K562 (cell line): ENCODE measurements at regions of chr7 and their contacts with region 1.

Region 1: DNA sequence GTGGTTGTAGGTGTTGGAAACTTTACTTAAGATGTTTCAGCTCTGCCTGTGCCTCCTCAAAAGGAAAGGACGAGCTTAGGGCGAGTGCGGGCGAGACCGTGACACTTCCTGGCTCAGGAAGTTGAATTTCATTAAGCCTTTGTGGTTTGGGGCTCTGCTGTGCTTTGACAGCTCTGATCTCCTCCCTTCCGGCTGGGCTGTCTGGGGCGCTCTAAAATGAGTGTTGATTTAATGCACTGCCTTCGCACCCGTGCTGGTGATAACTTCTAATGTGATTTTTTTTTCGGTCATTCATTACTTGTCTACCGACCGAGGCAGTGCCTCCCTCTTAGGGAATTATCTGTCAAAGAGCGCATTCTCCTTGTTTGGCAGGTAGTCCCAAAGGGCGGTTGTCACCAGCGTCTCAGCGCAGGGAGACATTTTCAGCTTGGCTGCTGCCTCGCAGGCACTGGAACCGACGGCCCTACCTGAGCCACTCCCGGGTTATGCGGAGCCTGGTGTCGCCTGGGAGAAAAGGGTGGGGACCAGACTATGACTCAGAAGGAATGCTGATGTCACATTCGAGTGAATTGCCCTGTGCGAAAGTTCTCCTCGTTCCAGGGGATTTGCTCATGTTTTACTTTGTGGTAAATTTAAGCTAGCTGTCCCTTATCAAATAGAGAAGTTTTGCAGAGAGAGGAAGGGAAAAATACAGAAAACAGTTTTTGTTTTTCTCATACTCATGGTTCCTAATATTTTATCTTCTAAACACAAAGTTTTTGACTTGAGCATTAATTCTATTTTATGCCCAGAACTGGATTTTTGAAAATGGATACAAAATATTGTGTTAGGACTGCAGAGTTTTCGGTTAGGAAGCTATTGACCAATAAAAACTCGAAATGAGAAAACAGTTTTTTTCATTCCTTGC is 920 bp downstream of the TES start:
- DNase-seq: peak; percentile 82 to 95 (median 88)
- ATAC-seq: peak; percentile 88
- H3K4me3 ChIP-seq: peak overlapping the region; percentile 74
- H3K27ac ChIP-seq: peak overlapping the region; percentile 88
- H3K4me1 ChIP-seq: peaks cover 10 to 28% of the 10 kb centered on the region in 2 experiments
- H3K27me3 ChIP-seq: no peaks in the 10 kb centered on the region
- CTCF ChIP-seq: no peak
- EP300 ChIP-seq: peak; percentile 54; the same call in 1 of the 2 replicates
- POLR2A ChIP-seq: peak; percentile 92
- RAD21 ChIP-seq: peak in 1 of 2 experiments; percentile 7; a peak in 2 of 4 replicates

Region 2: GRCh38 chr7:116200963-116201362 is 10.3 kb before region 1 on chr7:
- CTCF ChIA-PET with region 1: no interaction called
- POLR2A ChIA-PET with region 1: interaction called, 13 read pairs
- in situ Hi-C with region 1: no loop called
- intact Hi-C with region 1: no loop called
- DNase-seq: no peak
- ATAC-seq: no peak
- H3K4me3 ChIP-seq: no peak overlapping the region
- H3K27ac ChIP-seq: no peak overlapping the region
- H3K4me1 ChIP-seq: no peaks in the 10 kb centered on the region
- H3K27me3 ChIP-seq: no peaks in the 10 kb centered on the region
- CTCF ChIP-seq: no peak
- EP300 ChIP-seq: no peak
- POLR2A ChIP-seq: no peak
- RAD21 ChIP-seq: no peak

Region 3: GRCh38 chr7:116236020-116236630 is 24.9 kb after region 1 on chr7:
- CTCF ChIA-PET with region 1: no interaction called
- POLR2A ChIA-PET with region 1: interaction called, 10 read pairs
- in situ Hi-C with region 1: no loop called
- intact Hi-C with region 1: loop called (anchors 2 kb)
- DNase-seq: peak; percentile 40 to 70 (median 42)
- ATAC-seq: peak; percentile 59
- H3K4me3 ChIP-seq: no peak overlapping the region
- H3K27ac ChIP-seq: no peak overlapping the region
- H3K4me1 ChIP-seq: peaks cover 3 to 13% of the 10 kb centered on the region in 2 experiments; a peak in 4 of 5 replicates
- H3K27me3 ChIP-seq: no peaks in the 10 kb centered on the region
- CTCF ChIP-seq: peak; percentile 46 to 81 (median 64); a peak in 5 of 6 replicates
- EP300 ChIP-seq: no peak
- POLR2A ChIP-seq: no peak
- RAD21 ChIP-seq: peak; percentile 82 to 86

Region 4: DNA sequence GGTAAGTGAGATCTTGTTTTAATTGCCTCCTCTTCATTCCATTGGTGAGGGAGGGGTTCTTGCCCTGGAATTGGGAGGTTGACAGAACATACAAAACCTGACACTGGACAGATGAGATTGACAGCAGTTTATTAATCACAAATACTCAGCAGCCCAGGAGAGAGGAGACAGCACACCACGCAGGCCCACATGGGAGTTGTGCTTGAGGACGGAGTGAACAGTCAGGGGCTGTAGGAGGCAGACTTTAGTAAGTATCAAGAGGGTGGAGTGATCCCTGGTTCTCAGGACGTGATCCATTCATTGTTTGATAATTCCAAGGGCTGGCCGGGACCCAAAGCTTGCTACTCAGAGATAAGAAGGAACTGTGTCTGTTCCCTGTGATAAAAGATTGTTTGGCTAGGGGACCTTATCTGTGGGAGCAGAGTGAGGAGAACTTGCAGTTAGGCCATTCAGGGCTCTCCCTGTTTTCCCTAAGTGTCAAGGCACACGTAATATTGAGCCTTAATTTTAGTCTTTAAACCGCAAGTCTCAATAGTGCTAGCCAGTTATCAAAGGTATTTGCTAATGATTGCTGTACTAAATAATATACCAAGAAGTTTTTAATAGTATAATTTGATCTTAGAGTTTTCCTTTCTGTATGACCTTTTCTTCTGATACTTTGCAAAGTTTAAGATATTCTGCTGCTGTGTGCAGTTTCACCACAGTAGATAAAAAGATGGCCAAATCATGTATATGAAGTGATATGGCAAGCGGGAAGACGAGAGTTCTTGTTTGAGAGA is 665.6 kb after region 1 on chr7:
- CTCF ChIA-PET with region 1: no interaction called
- POLR2A ChIA-PET with region 1: no interaction called
- in situ Hi-C with region 1: no loop called
- intact Hi-C with region 1: loop called (anchors 5 kb)
- DNase-seq: peak; percentile 88 to 99 (median 92)
- ATAC-seq: peak; percentile 99
- H3K4me3 ChIP-seq: no peak overlapping the region; the same call in 1 of the 2 replicates
- H3K27ac ChIP-seq: peak overlapping the region; percentile 64
- H3K4me1 ChIP-seq: peaks cover 14 to 34% of the 10 kb centered on the region in 2 experiments
- H3K27me3 ChIP-seq: no peaks in the 10 kb centered on the region
- CTCF ChIP-seq: peak; percentile 68 to 83 (median 80)
- EP300 ChIP-seq: peak; percentile 100
- POLR2A ChIP-seq: no peak
- RAD21 ChIP-seq: peak; percentile 42 to 70; a peak in 3 of 4 replicates

Region 5: DNA sequence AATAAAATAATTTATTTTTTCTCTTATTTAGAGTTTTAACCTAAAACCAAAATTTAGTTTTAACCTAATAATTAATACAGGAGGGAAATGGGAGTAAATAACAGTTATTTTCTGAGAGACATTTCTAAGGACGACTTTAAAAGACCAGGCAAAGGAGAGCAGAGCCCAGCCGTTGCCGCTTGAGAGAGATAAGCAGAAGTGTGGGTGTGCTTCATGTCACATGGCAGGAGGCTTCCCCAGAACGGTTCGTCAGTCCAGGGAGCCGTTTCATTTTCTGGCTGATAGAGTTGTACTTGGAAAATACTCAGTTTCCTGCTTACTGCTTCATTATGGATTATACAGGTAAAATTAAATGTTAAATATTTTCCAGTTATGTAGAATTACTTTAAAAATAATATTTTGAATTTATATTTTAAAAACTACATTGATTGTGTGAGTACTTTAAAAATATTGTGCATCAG is 803.4 kb after region 1 on chr7:
- CTCF ChIA-PET with region 1: no interaction called
- POLR2A ChIA-PET with region 1: no interaction called
- in situ Hi-C with region 1: no loop called
- intact Hi-C with region 1: loop called (anchors 10 kb)
- DNase-seq: peak; percentile 79 to 97 (median 89)
- ATAC-seq: peak; percentile 88
- H3K4me3 ChIP-seq: peak overlapping the region; percentile 40
- H3K27ac ChIP-seq: peak overlapping the region; percentile 85
- H3K4me1 ChIP-seq: peaks cover 13 to 72% of the 10 kb centered on the region in 2 experiments
- H3K27me3 ChIP-seq: no peaks in the 10 kb centered on the region
- CTCF ChIP-seq: no peak
- EP300 ChIP-seq: peak; percentile 95
- POLR2A ChIP-seq: peak; percentile 81
- RAD21 ChIP-seq: peak in 1 of 2 experiments; percentile 17; a peak in 1 of 4 replicates